Activated CD4-positive, alpha-beta memory T cell treated with anti-CD3 and anti-CD28 coated beads for 36 hours (primary cell): ENCODE measurements at regions of chr3 and their contacts with region 1.

Region 1: DNA sequence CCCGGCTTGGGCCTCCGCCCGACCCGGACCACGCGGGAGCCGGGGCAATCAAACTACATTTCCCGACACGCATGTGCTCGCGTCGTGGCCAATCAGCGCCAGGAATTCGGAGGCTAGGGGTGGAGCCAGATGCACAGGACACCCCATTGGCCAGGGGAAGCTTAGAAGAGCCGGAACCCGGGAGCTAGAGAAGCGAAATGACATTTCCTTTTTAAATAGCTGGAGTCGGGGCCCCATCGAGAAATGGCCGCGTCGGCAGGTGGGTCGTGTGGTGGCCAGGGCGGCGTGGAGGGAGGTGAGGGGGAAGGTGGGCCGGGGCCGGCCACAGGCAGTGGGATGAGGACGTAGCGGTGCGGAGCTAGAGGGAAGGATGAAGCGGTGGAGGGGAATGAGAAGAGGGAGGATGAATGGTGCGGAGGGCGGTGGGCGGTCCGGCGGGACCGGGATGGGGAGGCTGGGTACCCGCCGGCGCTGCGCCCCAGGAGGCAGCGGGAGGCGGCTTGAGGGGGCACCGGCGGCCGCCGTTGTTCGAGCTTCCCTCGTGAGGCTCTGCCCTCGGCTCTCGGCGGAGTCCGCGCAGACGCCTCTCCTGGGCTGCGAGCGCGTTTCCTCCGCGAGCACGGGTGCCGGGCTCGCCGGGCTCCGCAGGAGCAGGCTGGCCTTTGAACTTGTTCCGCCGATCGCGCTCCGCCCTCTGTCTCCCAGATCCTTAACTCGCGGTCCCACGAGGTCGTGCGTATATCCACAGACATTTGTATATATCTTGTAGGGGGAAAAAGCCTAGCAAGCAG is at the start of gene KBTBD8:
- DNase-seq: peak; percentile 99
- H3K4me3 Mint-ChIP-seq: peak within 1 kb of the TSS; percentile 92
- H3K27ac Mint-ChIP-seq: peak within 1 kb of the TSS; percentile 92
- H3K4me1 Mint-ChIP-seq: peaks cover 37% of the 10 kb centered on the region
- H3K27me3 Mint-ChIP-seq: peaks cover 9% of the 10 kb centered on the region
- total RNA-seq, gene KBTBD8: 13.5 to 15.5 TPM

Region 2: GRCh38 chr3:66386925-66387650 is 611.2 kb before region 1 on chr3:
- CTCF ChIA-PET with region 1: no interaction called
- POLR2A ChIA-PET with region 1: no interaction called
- intact Hi-C with region 1: loop called (anchors 2 kb)
- DNase-seq: no peak
- H3K4me3 Mint-ChIP-seq: no peak overlapping the region
- H3K27ac Mint-ChIP-seq: no peak overlapping the region
- H3K4me1 Mint-ChIP-seq: peaks cover 41% of the 10 kb centered on the region
- H3K27me3 Mint-ChIP-seq: no peaks in the 10 kb centered on the region

Region 3: DNA sequence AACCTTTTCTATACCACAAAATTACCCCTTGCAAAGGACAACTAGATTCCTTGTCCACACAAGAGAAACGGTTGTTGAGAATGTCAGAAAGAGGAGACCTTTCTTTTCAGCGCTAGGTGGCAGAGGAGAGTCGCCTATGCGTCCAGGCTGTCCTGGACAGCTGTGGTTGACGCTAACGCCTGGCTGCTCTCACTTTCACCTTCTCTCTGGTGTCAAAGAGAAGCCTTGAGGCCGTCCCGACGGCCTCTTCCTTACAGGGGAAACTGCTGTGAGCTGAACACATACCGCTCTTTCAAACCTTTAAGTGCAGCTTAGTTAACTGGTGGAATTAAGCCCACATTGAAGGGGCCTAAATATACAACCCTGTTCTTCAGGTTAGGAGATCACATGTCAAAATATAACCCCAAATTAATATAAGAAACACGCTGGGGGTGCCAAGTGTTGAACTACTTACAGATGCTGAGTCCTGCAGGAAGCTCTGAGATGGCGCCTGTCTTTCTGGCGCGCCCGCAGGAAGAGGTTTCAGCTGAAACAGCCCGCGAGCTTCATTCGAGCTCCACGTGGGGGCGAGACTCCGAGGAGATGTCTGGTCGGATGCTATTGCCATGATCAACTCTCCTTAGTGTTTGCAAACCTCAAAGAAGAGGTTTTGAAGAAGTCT is 26.3 kb before region 1 on chr3:
- CTCF ChIA-PET with region 1: interaction called, 30 read pairs
- POLR2A ChIA-PET with region 1: interaction called, 4 read pairs
- intact Hi-C with region 1: loop called (anchors 1 kb)
- DNase-seq: peak; percentile 79
- H3K4me3 Mint-ChIP-seq: peak overlapping the region; percentile 68
- H3K27ac Mint-ChIP-seq: peak overlapping the region; percentile 61
- H3K4me1 Mint-ChIP-seq: peaks cover 13% of the 10 kb centered on the region
- H3K27me3 Mint-ChIP-seq: no peaks in the 10 kb centered on the region

Region 4: DNA sequence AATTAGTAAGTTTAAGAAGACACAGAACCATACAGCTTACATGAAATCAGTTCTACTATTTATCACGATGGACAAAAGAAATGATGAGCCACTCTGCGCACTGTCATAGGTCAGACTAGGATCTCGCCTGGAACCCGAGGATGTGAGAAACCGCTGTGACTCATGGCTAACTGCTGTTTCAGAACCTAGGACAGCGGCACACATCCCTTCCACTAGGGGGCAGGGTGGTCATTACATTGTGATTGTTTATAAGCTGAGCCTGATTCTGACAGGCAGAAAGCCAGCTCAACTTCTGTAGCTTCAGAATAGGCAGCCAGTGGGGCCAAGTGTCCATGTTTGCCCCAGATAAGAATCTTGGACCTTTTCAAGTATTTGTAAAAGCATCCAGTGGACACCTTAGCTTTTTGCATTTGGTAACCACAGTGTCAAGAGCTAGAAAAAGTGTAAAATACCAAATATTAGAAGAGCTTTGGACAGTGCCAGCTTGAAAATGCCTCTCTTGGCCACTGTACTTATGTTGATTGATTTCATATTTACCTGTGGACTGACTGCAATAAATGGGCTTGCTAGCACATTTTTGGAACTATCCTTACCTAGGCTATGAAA is 115.6 kb after region 1 on chr3:
- CTCF ChIA-PET with region 1: interaction called, 10 read pairs
- POLR2A ChIA-PET with region 1: no interaction called
- intact Hi-C with region 1: no loop called
- DNase-seq: peak; percentile 91
- H3K4me3 Mint-ChIP-seq: no peak overlapping the region
- H3K27ac Mint-ChIP-seq: peak overlapping the region; percentile 13
- H3K4me1 Mint-ChIP-seq: peaks cover 6% of the 10 kb centered on the region
- H3K27me3 Mint-ChIP-seq: peaks cover 22% of the 10 kb centered on the region

Region 5: DNA sequence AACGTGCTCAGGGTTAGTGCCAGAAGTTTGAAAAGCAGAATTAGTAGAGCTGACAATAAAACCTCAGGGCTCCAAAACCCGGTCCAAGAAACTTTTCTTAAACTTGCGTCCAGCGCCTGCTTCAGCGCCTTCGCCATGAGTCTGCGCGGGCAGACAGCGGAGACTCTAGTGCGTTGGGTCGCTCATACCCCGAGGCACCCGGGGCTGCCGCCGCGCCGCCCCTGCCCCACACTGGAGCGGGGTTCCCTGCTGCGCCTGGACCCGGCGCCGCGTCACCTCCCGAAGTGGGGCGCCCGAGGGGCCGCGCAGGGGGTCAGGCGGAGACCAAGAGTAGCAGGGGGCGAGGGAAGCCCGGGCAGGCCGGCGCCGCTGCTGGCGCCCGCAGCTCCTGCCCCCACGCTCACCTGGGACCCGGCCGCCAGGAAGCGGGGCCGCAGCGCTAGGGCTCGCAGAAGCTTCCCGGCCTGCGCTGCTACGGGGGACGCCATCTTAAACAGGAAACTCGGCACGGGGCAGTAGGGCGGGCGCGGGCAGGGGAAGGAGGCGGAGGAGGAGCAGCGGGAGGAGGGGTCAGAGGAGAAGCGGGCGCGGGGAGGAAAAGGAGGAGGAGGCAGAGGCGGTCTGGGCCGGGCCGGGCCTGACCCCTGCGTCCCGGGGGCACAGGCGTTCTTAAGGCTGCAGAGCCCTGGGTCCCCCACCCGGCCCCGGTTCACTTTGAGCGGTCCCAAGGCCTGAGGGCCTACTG is 656.0 kb after region 1 on chr3 and contains the start of gene SUCLG2:
- CTCF ChIA-PET with region 1: no interaction called
- POLR2A ChIA-PET with region 1: no interaction called
- intact Hi-C with region 1: loop called (anchors 1 kb)
- DNase-seq: peak; percentile 91
- H3K4me3 Mint-ChIP-seq: peak within 1 kb of the TSS; percentile 76
- H3K27ac Mint-ChIP-seq: peak within 1 kb of the TSS; percentile 82
- H3K4me1 Mint-ChIP-seq: peaks cover 58% of the 10 kb centered on the region
- H3K27me3 Mint-ChIP-seq: no peaks in the 10 kb centered on the region
- total RNA-seq, gene SUCLG2: 53.3 to 57.8 TPM

Region 6: DNA sequence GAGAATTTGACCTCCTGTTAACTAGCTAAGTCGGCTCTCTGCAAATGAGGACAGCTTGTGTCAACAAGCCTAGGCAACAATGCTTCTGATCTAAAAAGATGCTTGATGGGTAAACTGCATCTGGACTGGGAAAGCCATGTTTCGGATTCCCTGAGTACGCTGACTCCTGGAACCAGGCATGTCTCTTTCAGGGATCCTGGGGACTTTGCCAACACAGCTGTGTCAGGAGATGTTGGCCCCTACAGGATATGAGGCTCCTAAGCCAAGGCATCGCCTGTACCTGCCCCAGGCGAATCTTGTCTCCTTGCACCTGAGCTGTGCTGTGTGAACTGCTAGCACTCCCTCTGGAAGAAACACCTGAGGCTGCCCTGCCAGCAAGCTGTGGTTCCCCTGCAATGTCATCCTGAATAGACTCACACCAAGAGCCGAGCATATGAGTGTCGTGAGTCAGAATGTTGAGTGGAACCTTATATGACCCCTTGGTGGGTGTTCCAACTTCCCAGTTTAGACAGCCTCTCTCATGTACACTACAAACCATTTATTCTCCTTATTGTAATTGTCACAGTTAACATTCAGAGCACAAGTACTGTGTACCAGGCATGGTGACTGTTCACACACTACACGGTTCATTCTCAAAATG is 1998.2 kb after region 1 on chr3:
- CTCF ChIA-PET with region 1: no interaction called
- POLR2A ChIA-PET with region 1: no interaction called
- intact Hi-C with region 1: loop called (anchors 5 kb)
- DNase-seq: peak; percentile 50
- H3K4me3 Mint-ChIP-seq: no peak overlapping the region
- H3K27ac Mint-ChIP-seq: peak overlapping the region; percentile 56
- H3K4me1 Mint-ChIP-seq: peaks cover 21% of the 10 kb centered on the region
- H3K27me3 Mint-ChIP-seq: no peaks in the 10 kb centered on the region